ENCODE measurements at regions of chr6 and their contacts with region 1.

Region 1: GRCh38 chr6:108113557-108114519 is 39.3 kb upstream of the OSTM1 start:
- DNase-seq: peak; percentile 62
- CTCF ChIP-seq: peak; percentile 8

Region 2: DNA sequence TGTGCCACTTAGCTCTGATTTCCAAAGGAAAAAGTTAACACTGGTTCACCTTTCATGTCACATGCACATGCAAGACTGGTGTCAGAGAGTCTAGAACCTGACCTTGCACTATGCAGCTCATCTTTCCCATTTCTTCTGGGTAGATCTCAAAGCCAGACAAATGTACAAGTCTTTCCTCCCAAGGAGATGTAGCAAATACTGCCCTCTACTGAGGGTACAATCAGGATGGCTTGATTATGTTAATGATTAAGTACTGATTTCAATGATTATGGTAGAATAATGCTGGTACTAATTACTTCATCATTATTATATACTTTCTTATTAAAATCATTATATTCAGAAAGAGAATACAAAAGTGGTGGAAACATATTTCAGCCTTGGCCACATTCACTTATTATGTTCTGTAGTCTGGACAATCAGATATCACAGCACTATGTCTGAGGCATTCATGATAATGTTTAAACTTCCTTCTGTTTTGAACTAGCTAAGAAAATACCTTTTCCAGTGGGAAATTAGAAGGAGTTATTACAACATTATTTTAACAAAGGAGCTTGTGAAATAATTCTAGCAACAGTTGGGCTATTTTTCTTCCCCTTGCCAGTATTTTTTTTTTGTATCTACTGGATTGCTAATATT is 378.4 kb after region 1 on chr6:
- in situ Hi-C with region 1: loop called (anchors 25 kb)
- DNase-seq: peak; percentile 38
- CTCF ChIP-seq: peak; percentile 24

Measured in GM13976 (cell line).